Psoas muscle (tissue), 8 donors: ENCODE measurements at regions of chr4 and their contacts with region 1.

Region 1: GRCh38 chr4:41360214-41360920 is 103.6 kb downstream of the UCHL1 start:
- DNase-seq: peak; percentile 86 to 93
- ATAC-seq: peak; percentile 82 to 89 (median 84)
- H3K4me3 ChIP-seq: peak overlapping the region; percentile 90
- H3K27ac ChIP-seq: peak overlapping the region; percentile 90
- H3K4me1 ChIP-seq: peaks cover 26% of the 10 kb centered on the region
- H3K27me3 ChIP-seq: no peaks in the 10 kb centered on the region
- CTCF ChIP-seq: no peak

Region 2: GRCh38 chr4:41418444-41418843 is 58.1 kb after region 1 on chr4:
- intact Hi-C with region 1: loop called (anchors 2 to 5 kb)
- DNase-seq: peak; percentile 62 to 87
- ATAC-seq: peak; percentile 85 to 93 (median 90)
- H3K4me3 ChIP-seq: peak overlapping the region; percentile 10
- H3K27ac ChIP-seq: peak overlapping the region; percentile 67
- H3K4me1 ChIP-seq: peaks cover 33% of the 10 kb centered on the region
- H3K27me3 ChIP-seq: no peaks in the 10 kb centered on the region
- CTCF ChIP-seq: no peak

Region 3: GRCh38 chr4:41538017-41538733 is 177.8 kb after region 1 on chr4 and contains the start of gene LIMCH1:
- intact Hi-C with region 1: loop called in 1 of 2 experiments (anchors 2 kb)
- DNase-seq: peak; percentile 74 to 87
- ATAC-seq: peak; percentile 86 to 90 (median 88)
- H3K4me3 ChIP-seq: peak within 1 kb of the TSS; percentile 60
- H3K27ac ChIP-seq: peak within 1 kb of the TSS; percentile 90
- H3K4me1 ChIP-seq: peaks cover 65% of the 10 kb centered on the region
- H3K27me3 ChIP-seq: no peaks in the 10 kb centered on the region
- CTCF ChIP-seq: no peak
- total RNA-seq, gene LIMCH1: 169 to 279 (median 185) TPM

Region 4: DNA sequence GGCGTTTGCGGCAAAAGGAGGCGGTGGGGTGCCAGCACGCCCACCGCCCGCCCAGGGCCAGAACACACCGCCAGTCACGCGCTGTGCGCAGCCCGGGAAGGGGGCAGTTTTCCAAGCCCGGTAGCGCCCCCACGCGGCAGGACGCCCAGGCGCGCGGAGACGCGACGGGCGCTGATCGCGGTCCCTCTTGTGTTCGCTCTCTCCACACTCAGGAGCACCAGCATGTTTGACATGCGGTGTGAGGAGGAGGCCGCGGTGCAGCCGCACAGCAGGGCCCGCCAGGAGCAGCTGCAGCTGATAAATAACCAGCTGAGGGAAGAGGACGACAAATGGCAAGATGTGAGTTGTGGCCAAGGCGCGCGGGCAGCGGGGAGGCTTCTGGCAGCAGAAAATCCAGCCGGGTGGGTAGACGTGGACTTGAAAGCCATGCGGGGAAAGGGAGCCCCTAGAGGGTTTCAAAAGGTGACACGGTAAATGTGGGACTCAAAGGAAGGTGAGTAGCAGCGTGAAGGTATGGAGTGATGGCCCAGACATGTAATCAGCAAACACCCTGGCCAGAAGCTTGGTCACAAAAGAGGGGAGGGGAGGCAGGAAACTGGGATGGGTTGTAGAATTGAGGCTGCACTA is 284.0 kb after region 1 on chr4:
- intact Hi-C with region 1: loop called (anchors 5 to 10 kb)
- DNase-seq: peak; percentile 77 to 88
- ATAC-seq: peak; percentile 87 to 98 (median 92)
- H3K4me3 ChIP-seq: peak overlapping the region; percentile 42
- H3K27ac ChIP-seq: peak overlapping the region; percentile 27
- H3K4me1 ChIP-seq: no peaks in the 10 kb centered on the region
- H3K27me3 ChIP-seq: no peaks in the 10 kb centered on the region
- CTCF ChIP-seq: peak; percentile 86